MCF 10A (cell line): ENCODE measurements at regions of chr1 and their contacts with region 1.

Region 1: DNA sequence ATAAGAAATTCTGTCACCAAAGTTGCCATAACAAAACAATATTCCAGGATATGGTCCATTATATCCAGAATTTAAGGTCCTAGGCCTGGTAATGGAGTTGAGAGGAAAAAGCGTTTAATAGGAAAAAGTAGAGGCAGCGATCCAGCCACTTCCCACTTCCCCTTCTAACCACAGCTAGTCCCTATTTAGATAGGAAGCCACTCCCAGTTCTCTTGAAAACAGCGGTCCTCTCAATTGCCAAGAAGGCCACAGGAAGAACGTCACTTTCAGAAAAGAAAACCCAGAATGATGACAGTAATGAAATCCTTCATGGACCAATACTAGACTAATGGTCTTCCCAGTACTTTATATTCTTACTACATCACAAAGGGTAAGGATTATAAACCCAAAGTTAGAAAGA is 38.6 kb downstream of the ABL2 start:
- DNase-seq: no peak
- H3K4me3 Mint-ChIP-seq: no peak overlapping the region
- H3K27ac Mint-ChIP-seq: no peak overlapping the region
- H3K4me1 Mint-ChIP-seq: peaks cover 12% of the 10 kb centered on the region
- H3K27me3 Mint-ChIP-seq: no peaks in the 10 kb centered on the region
- CTCF ChIP-seq: no peak

Region 2: GRCh38 chr1:179105350-179105749 is 85.5 kb before region 1 on chr1:
- CTCF ChIA-PET with region 1: interaction called, 12 read pairs
- POLR2A ChIA-PET with region 1: no interaction called
- intact Hi-C with region 1: loop called (anchors 5 kb)
- DNase-seq: peak; percentile 27
- H3K4me3 Mint-ChIP-seq: no peak overlapping the region
- H3K27ac Mint-ChIP-seq: no peak overlapping the region
- H3K4me1 Mint-ChIP-seq: no peaks in the 10 kb centered on the region
- H3K27me3 Mint-ChIP-seq: no peaks in the 10 kb centered on the region
- CTCF ChIP-seq: peak; percentile 43

Region 3: GRCh38 chr1:179129702-179130473 is 61.0 kb before region 1 on chr1:
- CTCF ChIA-PET with region 1: interaction called, 13 read pairs
- POLR2A ChIA-PET with region 1: interaction called, 4 read pairs
- intact Hi-C with region 1: no loop called
- DNase-seq: peak; percentile 38
- H3K4me3 Mint-ChIP-seq: peak overlapping the region; percentile 58
- H3K27ac Mint-ChIP-seq: peak overlapping the region; percentile 72
- H3K4me1 Mint-ChIP-seq: peaks cover 48% of the 10 kb centered on the region
- H3K27me3 Mint-ChIP-seq: no peaks in the 10 kb centered on the region
- CTCF ChIP-seq: no peak

Region 4: DNA sequence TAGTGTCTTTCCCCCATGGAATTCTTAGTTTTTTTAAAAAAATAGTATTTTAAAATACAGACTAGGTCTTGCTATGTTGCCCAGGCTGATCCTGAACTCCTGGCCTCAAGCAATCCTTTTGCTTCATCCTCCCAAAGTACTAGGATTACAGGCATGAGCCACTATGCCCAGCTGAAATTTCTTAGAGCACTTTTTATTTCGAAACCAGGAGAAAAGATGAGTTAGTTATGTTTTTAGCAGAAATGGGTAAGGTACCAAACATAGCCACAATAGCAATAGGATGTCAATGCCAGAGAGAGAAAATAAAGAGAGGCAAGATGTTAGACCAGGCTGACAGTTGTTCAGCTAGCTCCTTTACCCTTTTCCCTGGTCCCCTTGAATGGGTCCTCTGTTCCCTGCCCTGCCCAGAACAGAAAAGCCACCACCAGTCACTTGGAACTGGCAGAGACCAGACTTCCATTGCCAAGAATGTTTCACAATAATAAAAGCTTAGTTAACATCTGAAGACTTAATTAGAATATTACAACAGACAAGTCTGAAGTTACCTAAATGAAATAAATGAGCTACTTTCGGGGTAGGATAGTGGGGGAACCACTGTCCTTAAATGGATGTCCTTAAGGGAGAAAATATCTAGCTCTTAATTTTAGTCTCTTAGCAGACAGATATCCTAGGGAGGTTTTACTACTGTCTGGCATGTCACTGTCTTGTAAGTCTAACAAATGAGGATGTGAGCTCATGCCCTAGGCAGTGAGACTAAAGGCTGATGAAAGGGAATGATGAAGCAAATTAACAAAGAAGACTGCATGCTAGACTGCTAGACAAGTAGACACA is 15.6 kb before region 1 on chr1:
- CTCF ChIA-PET with region 1: interaction called, 20 read pairs
- POLR2A ChIA-PET with region 1: interaction called, 4 read pairs
- intact Hi-C with region 1: no loop called
- DNase-seq: peak; percentile 74
- H3K4me3 Mint-ChIP-seq: peak overlapping the region; percentile 21
- H3K27ac Mint-ChIP-seq: peak overlapping the region; percentile 84
- H3K4me1 Mint-ChIP-seq: peaks cover 24% of the 10 kb centered on the region
- H3K27me3 Mint-ChIP-seq: no peaks in the 10 kb centered on the region
- CTCF ChIP-seq: no peak

Region 5: GRCh38 chr1:179269071-179269470 is 78.2 kb after region 1 on chr1:
- CTCF ChIA-PET with region 1: no interaction called
- POLR2A ChIA-PET with region 1: no interaction called
- intact Hi-C with region 1: no loop called
- DNase-seq: no peak
- H3K4me3 Mint-ChIP-seq: no peak overlapping the region
- H3K27ac Mint-ChIP-seq: no peak overlapping the region
- H3K4me1 Mint-ChIP-seq: no peaks in the 10 kb centered on the region
- H3K27me3 Mint-ChIP-seq: no peaks in the 10 kb centered on the region
- CTCF ChIP-seq: no peak

Region 6: DNA sequence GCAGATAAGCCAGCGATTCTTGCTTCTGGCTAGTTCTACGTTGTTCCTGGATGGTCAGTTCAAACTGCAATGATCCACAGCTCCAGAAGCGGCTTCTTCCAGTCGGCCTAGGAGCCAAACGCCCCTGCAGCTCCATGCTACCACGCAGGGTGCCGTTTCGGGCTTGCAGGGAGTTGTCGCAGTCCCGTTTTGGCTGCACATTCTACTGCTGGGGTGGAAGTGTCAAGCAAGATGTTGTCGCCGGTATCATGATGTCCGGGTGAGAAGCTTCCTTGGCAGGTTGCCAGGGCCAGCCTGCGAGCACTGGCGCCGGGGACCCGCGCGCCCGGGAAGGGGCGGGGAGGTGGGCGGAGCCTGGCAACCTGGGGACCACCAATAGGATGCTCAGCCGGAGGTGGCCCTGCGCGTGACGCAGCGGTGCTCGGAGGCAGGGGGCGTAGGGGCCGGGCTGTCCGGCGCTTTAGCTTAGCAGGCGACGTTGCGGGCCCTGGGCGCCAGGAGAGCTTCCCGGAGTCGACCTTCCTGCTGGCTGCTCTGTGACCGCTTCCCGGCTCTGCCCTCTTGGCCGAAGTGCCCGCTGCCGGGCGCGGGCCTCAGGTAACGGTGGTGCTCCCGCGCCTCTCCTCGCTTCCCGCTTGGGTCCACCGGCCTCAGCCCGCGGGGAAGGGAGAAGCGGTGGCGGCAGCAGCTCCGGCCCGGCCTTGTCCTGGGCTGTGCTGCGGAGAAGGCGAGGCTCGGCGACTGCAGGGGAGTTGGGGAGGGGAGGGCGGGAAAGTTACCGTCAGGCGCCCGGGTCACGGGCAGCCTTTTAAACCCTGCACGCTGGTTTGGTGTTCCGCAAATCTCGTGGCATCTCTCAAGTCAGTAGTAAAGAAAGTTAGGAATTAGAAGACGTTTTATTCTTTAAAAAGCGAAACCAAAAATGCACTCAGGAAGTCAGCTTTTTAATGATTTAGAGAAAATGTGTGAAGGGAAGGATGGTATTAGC is 102.8 kb after region 1 on chr1 and contains the start of gene SOAT1:
- CTCF ChIA-PET with region 1: no interaction called
- POLR2A ChIA-PET with region 1: no interaction called
- intact Hi-C with region 1: no loop called
- DNase-seq: peak; percentile 90
- H3K4me3 Mint-ChIP-seq: peak within 1 kb of the TSS; percentile 78
- H3K27ac Mint-ChIP-seq: peak within 1 kb of the TSS; percentile 68
- H3K4me1 Mint-ChIP-seq: peaks cover 29% of the 10 kb centered on the region
- H3K27me3 Mint-ChIP-seq: no peaks in the 10 kb centered on the region
- CTCF ChIP-seq: peak; percentile 16
- total RNA-seq, gene SOAT1: 28.4 and 39.7 TPM in 2 replicates